A673 (cell line): ENCODE measurements at regions of chr2 and their contacts with region 1.

Region 1: DNA sequence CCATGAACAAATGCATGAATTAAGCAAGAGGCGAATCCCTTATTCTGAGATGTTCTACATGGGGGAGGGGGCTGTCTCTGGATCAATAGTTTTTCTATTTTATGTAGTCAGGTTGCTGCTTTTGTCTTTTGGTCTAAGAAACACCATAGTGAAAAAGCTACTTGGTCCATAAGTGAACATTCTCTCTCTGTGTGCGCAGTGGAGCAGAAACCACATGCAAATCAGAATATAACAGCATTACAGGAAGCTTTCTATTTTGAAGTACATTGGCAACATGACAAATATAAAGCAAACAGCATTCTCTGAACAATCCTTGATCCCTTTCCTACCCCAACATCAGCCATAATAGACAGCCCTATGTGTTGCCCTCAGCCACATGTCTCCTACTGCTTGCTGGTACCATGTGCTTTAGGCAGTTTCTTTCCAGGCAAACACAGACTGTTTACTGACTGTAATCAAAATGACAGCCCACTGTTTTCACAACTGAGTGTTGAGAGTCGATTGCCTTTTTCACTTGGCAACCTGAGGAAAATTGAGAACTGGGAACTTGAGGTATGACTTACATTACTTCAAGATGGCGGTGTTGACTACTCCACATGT is 10.6 kb downstream of the SCN3A start:
- DNase-seq: no peak
- H3K4me3 ChIP-seq: no peak overlapping the region
- H3K27ac ChIP-seq: no peak overlapping the region
- H3K4me1 ChIP-seq: peaks cover 10% of the 10 kb centered on the region
- H3K27me3 ChIP-seq: no peaks in the 10 kb centered on the region
- CTCF ChIP-seq: no peak

Region 2: GRCh38 chr2:164430166-164430783 is 763.0 kb before region 1 on chr2:
- CTCF ChIA-PET with region 1: no interaction called
- POLR2A ChIA-PET with region 1: no interaction called
- intact Hi-C with region 1: no loop called
- DNase-seq: peak; percentile 45
- H3K4me3 ChIP-seq: no peak overlapping the region
- H3K27ac ChIP-seq: no peak overlapping the region
- H3K4me1 ChIP-seq: no peaks in the 10 kb centered on the region
- H3K27me3 ChIP-seq: peaks cover 69% of the 10 kb centered on the region
- CTCF ChIP-seq: peak; percentile 70

Region 3: GRCh38 chr2:165067958-165068757 is 125.1 kb before region 1 on chr2:
- CTCF ChIA-PET with region 1: interaction called, 12 read pairs
- POLR2A ChIA-PET with region 1: no interaction called
- intact Hi-C with region 1: no loop called
- DNase-seq: peak; percentile 84
- H3K4me3 ChIP-seq: peak overlapping the region; percentile 32
- H3K27ac ChIP-seq: peak overlapping the region; percentile 53
- H3K4me1 ChIP-seq: peaks cover 5% of the 10 kb centered on the region
- H3K27me3 ChIP-seq: no peaks in the 10 kb centered on the region
- CTCF ChIP-seq: no peak

Region 4: GRCh38 chr2:165428926-165429325 is 235.6 kb after region 1 on chr2:
- CTCF ChIA-PET with region 1: no interaction called
- POLR2A ChIA-PET with region 1: no interaction called
- intact Hi-C with region 1: no loop called
- DNase-seq: no peak
- H3K4me3 ChIP-seq: no peak overlapping the region
- H3K27ac ChIP-seq: no peak overlapping the region
- H3K4me1 ChIP-seq: peaks cover 24% of the 10 kb centered on the region
- H3K27me3 ChIP-seq: no peaks in the 10 kb centered on the region
- CTCF ChIP-seq: no peak

Region 5: DNA sequence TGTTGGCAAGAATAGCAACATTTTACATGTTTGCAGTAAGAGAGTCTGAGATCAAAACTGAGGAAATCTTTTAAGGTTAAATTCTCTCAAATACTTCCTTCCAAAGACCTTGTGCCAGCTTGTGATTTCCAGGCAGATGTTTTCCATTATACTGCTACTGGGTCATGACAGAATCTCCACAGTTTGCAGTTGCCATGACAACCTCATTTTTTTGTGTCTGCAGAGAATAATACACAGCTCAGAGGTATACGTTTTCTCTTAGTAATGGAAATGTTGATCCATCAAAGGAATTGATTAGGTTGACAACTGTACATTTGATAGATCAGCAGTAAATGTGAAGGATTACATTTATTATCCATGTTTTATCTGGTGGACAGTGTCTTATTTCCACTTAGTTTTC is 247.1 kb after region 1 on chr2:
- CTCF ChIA-PET with region 1: no interaction called
- POLR2A ChIA-PET with region 1: no interaction called
- intact Hi-C with region 1: no loop called
- DNase-seq: peak; percentile 90
- H3K4me3 ChIP-seq: no peak overlapping the region
- H3K27ac ChIP-seq: peak overlapping the region; percentile 51
- H3K4me1 ChIP-seq: peaks cover 21% of the 10 kb centered on the region
- H3K27me3 ChIP-seq: no peaks in the 10 kb centered on the region
- CTCF ChIP-seq: no peak